Right ventricle myocardium superior (tissue), 1 donor: ENCODE measurements at regions of chr7 and their contacts with region 1.

Region 1: GRCh38 chr7:50679218-50680007 is 103.3 kb downstream of the GRB10 start:
- DNase-seq: no peak
- ATAC-seq: peak; percentile 84

Region 2: GRCh38 chr7:50206453-50207250 is 472.8 kb before region 1 on chr7:
- intact Hi-C with region 1: loop called (anchors 10 kb)
- DNase-seq: no peak
- ATAC-seq: peak; percentile 28

Region 3: DNA sequence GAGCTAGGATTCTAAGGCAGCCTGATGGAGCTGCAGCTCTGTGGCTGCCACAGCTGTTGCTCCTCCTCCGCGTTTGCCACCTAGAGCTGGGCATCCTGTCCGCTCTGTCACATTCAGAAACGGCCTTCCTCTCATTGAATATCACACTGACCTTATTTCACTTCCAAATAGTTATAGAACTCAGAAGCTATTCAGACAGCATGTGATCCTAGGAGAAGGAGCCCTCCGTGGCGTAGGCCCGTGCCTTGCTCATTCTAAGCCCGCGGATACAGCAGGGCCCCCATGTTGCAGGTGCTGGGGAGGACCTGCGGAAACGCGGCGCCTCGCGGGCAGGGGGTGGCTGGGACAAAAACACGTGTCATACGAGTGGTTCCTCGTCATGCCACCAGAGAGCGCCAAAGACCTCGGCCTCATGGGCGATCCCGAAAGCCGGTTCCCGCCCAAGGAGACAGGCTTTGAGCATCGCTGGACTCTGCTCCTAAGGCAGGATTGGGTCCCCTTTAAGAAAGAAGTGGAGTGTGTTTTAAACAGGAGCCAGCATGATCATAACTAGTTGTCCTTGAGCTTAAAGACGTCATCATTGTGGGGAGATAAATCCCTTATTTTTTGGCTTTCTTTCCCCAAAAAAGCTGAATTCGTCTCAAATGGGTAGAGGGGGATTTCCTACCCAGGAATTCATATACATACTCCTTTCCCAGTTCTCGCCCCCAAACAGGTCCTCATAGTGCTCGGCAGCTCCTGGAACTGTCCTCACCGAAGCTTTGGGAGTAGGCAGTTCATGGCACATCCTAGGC is 211.4 kb before region 1 on chr7:
- intact Hi-C with region 1: loop called (anchors 5 kb)
- DNase-seq: peak; percentile 88
- ATAC-seq: peak; percentile 97

Region 4: GRCh38 chr7:50534690-50535290 is 144.6 kb before region 1 on chr7:
- intact Hi-C with region 1: no loop called
- DNase-seq: no peak
- ATAC-seq: no peak

Region 5: DNA sequence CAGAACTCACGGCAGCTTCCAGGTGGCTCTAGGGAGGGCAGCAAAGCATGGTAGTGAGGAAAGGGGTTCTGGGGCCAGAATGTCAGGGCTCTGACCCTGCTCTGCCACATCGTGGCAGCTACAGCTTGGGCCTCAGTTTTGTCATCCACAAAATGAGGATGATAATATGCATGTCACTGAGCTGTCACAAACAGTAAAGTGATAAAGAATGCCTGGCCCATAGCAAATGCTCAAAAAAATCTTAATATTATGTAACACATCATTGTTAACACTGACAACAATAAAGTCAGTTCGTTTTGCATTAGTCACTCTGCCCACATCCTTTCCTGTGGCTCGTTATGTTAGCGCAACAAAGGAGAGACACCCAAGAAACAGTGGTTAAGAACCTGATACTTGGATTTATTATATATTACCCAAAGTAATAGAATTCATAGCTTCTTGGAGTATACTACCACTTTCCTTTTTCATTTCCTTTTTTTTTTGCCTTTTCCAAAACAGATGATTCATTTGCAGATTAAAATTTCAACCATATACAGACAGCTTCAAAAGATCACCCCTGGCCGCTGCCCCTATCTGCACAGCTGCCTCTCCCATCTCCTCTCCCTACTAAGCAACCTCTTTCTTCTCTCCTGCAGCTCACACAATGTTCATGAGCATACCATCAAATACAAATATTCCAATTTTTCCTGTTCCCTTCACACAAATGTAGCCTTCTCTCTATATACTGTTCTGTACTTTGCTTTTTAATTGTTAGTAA is 68.7 kb before region 1 on chr7:
- intact Hi-C with region 1: loop called (anchors 5 kb)
- DNase-seq: no peak
- ATAC-seq: no peak

Region 6: DNA sequence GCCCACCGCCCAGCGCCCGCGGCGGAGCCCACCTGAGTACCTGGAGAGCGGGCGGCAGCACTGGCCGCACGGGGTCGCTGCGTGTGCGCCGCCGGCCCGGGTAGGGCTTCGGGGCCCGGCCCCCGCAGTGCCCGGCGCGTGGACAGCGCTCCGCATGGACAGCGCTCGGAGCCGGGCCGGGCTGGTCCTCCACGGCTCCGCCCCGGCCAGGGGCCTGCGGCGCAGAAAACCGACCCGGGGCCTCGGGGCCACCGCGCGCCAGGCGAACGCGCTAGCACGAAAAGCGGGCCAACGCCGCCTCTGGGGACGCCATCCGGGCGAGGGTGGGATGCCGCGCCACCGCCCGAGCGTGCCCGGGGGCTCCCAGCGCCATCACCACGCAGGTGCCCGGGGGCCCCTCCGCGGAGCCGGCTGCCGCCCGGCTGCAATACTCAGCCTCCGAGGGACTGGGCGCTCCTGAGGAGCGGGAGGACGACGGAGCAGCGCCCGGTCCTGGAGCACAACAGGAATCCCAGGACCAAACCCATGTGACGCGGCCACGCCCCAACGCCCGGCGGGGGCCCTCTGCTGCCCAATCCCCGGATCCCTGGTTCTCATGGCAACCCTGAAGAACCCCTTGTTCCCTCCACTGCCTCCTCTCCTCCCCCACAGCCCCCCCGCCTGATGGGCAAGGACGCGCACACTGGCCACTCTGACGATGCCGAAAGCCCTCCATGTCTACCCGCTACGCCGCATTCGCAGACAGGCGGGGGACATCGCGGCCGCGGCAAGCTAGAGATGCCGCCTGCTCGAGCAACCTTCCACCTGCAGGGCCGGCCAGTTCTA is 103.2 kb after region 1 on chr7 and contains the start of gene GRB10:
- intact Hi-C with region 1: no loop called
- DNase-seq: peak; percentile 56
- ATAC-seq: peak; percentile 89
- total RNA-seq, gene GRB10: 32.2 TPM

Region 7: DNA sequence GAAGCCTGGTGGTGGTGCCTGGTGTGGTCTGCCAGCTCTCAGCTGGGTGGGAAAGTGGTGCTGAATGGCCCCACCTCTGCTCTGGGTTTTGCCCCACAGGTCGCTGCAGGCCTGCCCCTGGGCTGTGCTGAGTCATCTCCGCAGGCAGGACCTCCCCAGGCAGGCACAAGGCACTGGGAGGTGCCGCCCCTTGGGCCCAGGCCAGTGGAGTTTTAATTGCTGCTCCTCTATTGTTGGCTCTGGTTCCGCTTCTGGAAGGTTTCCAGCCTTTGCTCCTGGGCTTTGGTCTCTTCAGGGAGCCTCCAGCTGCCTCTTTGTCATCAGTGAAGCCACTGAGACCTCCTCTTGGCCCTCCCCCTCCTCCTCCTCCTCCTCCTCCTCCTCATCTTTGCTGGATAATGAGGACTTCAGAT is 283.6 kb after region 1 on chr7:
- intact Hi-C with region 1: no loop called
- DNase-seq: peak; percentile 81
- ATAC-seq: peak; percentile 92

Region 8: GRCh38 chr7:51000956-51001355 is 321.5 kb after region 1 on chr7:
- intact Hi-C with region 1: no loop called
- DNase-seq: no peak
- ATAC-seq: no peak

Region 9: DNA sequence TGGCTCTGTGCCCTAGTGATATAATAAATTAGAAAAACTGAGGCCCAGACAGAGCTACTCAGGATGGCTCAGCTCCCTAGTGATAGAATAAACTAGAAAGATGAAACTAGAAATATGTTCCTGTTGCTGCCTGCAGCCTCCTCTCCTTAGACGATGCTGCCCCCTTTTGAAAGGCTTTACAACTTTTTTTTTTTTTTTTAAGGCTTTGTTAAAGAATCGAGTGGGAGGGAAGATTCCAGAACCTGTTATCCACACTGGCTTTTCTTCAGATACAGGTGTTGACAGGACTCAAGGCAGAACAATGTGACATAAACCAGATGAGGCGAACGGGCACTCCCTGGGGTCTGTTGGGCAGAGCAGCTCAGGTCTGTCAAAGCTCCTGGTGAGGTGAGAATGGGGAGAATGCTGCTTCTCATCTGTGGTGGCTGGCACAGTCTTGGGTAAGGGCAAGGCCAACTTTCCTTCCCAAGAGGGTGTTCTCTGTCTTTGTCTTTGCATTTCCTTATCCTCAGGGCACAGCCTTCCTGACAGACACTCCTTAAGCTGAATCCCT is 462.1 kb after region 1 on chr7:
- intact Hi-C with region 1: loop called (anchors 5 kb)
- DNase-seq: no peak
- ATAC-seq: peak; percentile 80